ENCODE measurements at regions of chr4 and their contacts with region 1.

Region 1: DNA sequence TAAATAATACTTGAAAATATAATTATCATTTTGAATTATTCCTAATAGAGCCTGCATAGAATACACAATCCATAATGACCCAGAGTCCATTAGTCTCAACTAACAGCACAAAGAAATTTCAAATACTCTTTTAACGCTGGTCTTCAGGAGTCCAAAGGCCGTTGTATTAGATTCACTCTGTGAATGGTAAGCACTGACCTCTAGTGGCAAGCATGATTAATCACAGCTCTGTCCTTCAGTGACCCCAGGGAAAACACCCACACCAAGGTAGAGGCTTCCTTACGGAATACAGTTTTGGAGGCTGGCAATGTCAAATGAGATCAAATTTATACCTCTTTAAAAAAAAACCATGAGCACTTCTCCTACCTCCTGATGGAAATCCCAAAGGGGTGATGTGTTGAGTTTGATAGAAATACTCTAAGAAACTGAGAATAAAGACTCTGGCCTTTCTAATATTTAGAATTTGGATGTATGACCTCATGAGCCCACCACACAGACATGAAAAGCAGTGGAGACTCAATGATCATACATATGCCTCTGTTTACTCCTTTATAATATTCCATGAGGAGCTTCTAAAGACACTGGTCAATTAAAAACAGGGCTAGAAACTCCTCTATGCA is 147.2 kb upstream of the DKK2 start:
- DNase-seq: no peak
- H3K4me3 ChIP-seq: no peak overlapping the region
- H3K27ac ChIP-seq: no peak overlapping the region
- H3K4me1 ChIP-seq: no peaks in the 10 kb centered on the region
- H3K27me3 ChIP-seq: no peaks in the 10 kb centered on the region
- CTCF ChIP-seq: peak; percentile 1 to 78 (median 76)
- EP300 ChIP-seq: no peak
- POLR2A ChIP-seq: no peak
- RAD21 ChIP-seq: peak; percentile 93

Region 2: DNA sequence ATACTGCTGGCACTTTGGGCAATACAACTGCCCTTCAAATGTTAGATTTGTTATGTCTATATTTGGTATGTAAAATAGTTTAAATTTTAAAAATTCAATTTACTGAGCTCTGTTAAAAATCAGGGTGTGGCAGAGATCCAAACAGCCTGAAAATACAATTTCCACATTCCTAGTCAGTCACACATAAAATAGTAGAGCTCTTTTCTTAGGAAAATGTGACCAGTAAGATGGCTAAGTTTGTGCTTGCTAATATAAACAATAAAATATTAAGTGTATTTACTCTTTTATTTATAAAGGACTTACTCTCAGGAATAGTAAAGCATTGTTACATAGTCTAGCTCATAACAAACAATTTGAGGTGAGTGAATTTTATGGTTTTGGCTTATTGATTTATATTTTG is 347.3 kb before region 1 on chr4:
- CTCF ChIA-PET with region 1: no interaction called
- POLR2A ChIA-PET with region 1: no interaction called
- DNase-seq: no peak
- H3K4me3 ChIP-seq: no peak overlapping the region
- H3K27ac ChIP-seq: no peak overlapping the region
- H3K4me1 ChIP-seq: no peaks in the 10 kb centered on the region
- H3K27me3 ChIP-seq: no peaks in the 10 kb centered on the region
- CTCF ChIP-seq: no peak
- EP300 ChIP-seq: no peak
- POLR2A ChIP-seq: no peak
- RAD21 ChIP-seq: no peak

Region 3: DNA sequence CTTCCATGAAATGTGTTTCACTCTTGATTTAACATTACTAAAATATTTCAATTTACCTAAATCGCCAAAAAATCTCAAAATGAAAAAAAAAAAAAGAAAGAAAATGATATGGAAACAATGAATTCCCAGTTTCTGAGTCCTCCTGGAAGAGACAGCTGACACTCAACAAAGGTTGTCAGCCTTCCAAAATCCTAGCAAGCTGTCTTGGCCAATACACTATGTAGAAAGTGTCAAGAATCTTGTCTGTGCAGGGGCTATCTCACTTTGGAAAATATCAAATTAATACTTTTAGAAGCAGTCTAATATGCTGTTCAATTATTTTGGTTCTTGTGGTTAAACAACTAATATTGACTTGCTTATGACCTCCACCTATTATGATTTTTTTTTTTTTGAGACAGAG is 155.9 kb before region 1 on chr4:
- CTCF ChIA-PET with region 1: no interaction called
- POLR2A ChIA-PET with region 1: no interaction called
- DNase-seq: no peak
- H3K4me3 ChIP-seq: no peak overlapping the region
- H3K27ac ChIP-seq: no peak overlapping the region
- H3K4me1 ChIP-seq: no peaks in the 10 kb centered on the region
- H3K27me3 ChIP-seq: no peaks in the 10 kb centered on the region
- CTCF ChIP-seq: no peak
- EP300 ChIP-seq: no peak
- POLR2A ChIP-seq: no peak
- RAD21 ChIP-seq: no peak

Region 4: DNA sequence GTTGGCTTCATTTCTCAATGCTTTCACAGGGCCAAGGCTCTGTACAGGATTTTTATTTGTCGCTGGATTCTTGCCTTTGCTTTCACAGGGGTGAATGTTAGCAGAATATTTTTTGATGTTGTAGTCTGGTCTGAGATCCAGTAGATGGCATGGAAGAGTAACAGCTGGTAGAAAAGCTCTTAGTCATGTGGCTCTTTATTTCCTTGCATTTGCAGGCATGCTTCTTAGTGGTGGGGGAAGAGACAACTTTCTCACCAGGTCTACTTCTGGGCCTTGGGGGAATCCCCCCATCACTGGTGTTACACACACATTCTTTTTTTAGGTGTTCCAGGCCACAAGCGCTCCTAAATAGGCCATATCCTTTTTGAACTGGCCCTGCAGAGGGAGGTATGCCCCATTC is 88.9 kb before region 1 on chr4:
- CTCF ChIA-PET with region 1: interaction called, 16 read pairs
- POLR2A ChIA-PET with region 1: no interaction called
- DNase-seq: no peak
- H3K4me3 ChIP-seq: no peak overlapping the region
- H3K27ac ChIP-seq: no peak overlapping the region
- H3K4me1 ChIP-seq: peaks cover 4 to 10% (median 8%) of the 10 kb centered on the region in 4 experiments; a peak in 6 of 7 replicates
- H3K27me3 ChIP-seq: no peaks in the 10 kb centered on the region
- CTCF ChIP-seq: peak in 2 of 3 experiments; percentile 44 to 49; a peak in 3 of 4 replicates
- EP300 ChIP-seq: no peak
- POLR2A ChIP-seq: no peak
- RAD21 ChIP-seq: peak; percentile 74 to 78

Region 5: DNA sequence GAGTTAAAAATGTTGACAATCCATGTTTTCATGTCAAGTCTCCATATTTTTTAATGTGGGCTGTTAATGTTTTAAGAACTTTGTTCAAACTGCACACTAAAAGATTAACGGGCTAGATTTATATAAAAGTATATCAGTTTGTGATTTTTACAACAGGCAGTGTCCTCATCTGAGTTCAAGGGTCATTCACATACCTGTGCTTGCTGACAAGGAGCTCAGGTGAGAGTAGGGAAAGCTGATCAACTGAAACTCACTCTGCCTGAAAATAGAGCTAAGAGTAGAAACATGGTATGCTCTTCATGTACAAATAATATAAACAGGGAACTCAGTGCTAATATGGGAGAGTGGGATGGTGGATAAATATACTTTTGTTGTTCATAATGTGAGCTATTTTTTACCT is 44.8 kb before region 1 on chr4:
- CTCF ChIA-PET with region 1: no interaction called
- POLR2A ChIA-PET with region 1: no interaction called
- DNase-seq: no peak
- H3K4me3 ChIP-seq: no peak overlapping the region
- H3K27ac ChIP-seq: no peak overlapping the region
- H3K4me1 ChIP-seq: no peaks in the 10 kb centered on the region
- H3K27me3 ChIP-seq: no peaks in the 10 kb centered on the region
- CTCF ChIP-seq: no peak
- EP300 ChIP-seq: no peak
- POLR2A ChIP-seq: no peak
- RAD21 ChIP-seq: no peak

Region 6: DNA sequence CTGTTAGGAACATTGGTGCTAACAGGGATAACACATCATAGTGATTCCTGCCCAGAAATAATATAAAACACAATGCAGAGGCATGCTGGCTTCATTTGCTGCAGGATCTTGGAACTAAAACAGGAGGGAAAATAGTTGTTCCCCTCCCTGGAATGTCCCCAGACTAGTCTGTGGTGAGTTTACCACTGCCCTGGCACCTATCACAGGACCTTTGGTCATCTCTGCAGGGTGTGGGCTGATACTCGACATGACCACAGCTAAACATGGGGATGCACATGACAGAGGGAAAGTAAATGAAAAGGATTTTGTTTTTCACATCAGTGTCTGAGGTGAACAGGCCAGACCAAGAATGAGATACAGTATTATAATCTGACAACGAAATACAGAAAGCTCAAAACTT is 13.0 kb after region 1 on chr4:
- CTCF ChIA-PET with region 1: interaction called, 25 read pairs
- POLR2A ChIA-PET with region 1: no interaction called
- DNase-seq: no peak
- H3K4me3 ChIP-seq: no peak overlapping the region
- H3K27ac ChIP-seq: no peak overlapping the region
- H3K4me1 ChIP-seq: no peaks in the 10 kb centered on the region
- H3K27me3 ChIP-seq: no peaks in the 10 kb centered on the region
- CTCF ChIP-seq: no peak
- EP300 ChIP-seq: no peak
- POLR2A ChIP-seq: no peak
- RAD21 ChIP-seq: no peak